Aorta (tissue), 5 donors: ENCODE measurements at regions of chr5 and their contacts with region 1.

Region 1: GRCh38 chr5:141320225-141321169 is at the start of gene TAF7:
- DNase-seq: peak; percentile 94 to 97
- ATAC-seq: peak; percentile 99
- H3K4me3 ChIP-seq: peak within 1 kb of the TSS; percentile 66 to 87
- H3K27ac ChIP-seq: peak within 1 kb of the TSS; percentile 20 to 78
- H3K4me1 ChIP-seq: peaks cover 0 to 2% of the 10 kb centered on the region in 2 donors
- H3K27me3 ChIP-seq: no peaks in the 10 kb centered on the region
- total RNA-seq, gene TAF7: 59.8 to 79.1 TPM

Region 2: GRCh38 chr5:141199359-141200235 is 120.9 kb before region 1 on chr5 and contains the start of gene PCDHB11:
- intact Hi-C with region 1: no loop called
- DNase-seq: no peak
- ATAC-seq: no peak
- H3K4me3 ChIP-seq: peak within 1 kb of the TSS; percentile 16 to 26
- H3K27ac ChIP-seq: no peak within 1 kb of the TSS
- H3K4me1 ChIP-seq: no peaks in the 10 kb centered on the region
- H3K27me3 ChIP-seq: no peaks in the 10 kb centered on the region
- total RNA-seq, gene PCDHB11: 8.1 to 15.3 TPM

Region 3: DNA sequence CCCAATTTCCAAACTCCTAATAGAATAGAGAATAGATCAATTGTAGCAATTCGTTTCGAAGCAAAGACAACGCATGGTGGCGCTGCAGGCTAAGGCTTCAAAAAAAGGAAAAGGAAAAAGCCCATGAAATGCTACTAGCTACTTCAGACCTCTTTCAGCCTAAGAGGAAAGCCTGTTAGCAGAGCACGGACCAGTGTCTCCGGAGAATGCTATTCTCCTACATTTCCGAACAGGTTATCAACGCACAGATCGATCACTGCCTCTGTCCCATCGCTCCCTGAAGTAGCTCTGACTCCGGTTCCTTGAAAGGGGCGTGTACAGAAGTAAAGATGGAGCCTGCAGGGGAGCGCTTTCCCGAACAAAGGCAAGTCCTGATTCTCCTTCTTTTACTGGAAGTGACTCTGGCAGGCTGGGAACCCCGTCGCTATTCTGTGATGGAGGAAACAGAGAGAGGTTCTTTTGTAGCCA is 75.2 kb before region 1 on chr5 and contains the start of gene PCDHB15:
- intact Hi-C with region 1: loop called in 1 of 2 experiments (anchors 10 kb)
- DNase-seq: no peak
- ATAC-seq: no peak
- H3K4me3 ChIP-seq: peak within 1 kb of the TSS; percentile 2 to 48
- H3K27ac ChIP-seq: no peak within 1 kb of the TSS
- H3K4me1 ChIP-seq: no peaks in the 10 kb centered on the region
- H3K27me3 ChIP-seq: no peaks in the 10 kb centered on the region
- total RNA-seq, gene PCDHB15: 8.7 to 10.9 TPM